ENCODE measurements at regions of chr6 and their contacts with region 1.

Region 1: GRCh38 chr6:109039795-109040194 is 54.9 kb downstream of the SESN1 start:
- DNase-seq: no peak
- ATAC-seq: peak; percentile 58; the same call in 1 of the 2 replicates
- H3K4me3 ChIP-seq: no peak overlapping the region
- H3K27ac ChIP-seq: no peak overlapping the region
- H3K4me1 ChIP-seq: no peaks in the 10 kb centered on the region
- H3K27me3 ChIP-seq: no peaks in the 10 kb centered on the region
- CTCF ChIP-seq: no peak

Region 2: DNA sequence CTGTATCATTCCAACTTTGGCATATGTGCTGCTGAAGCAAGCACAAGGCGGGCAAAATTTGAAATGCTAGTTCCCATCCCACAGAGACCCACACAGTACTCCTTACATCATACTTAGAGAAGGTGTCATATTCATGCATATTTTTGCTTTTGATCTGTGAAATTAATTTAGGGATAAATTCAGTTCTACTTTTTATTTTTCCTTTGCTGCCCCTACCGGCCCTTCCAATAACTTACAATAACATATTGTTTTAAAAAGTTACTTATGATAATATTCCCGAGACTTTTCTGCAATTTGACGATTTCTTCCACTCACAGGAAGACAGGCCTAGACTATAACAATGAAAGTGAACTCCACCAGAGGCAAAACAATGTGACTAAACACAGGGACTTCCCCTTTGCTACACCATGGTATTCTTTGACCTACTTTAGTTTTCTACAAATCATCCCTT is 19.8 kb after region 1 on chr6:
- CTCF ChIA-PET with region 1: no interaction called
- POLR2A ChIA-PET with region 1: interaction called, 10 read pairs
- in situ Hi-C with region 1: no loop called
- intact Hi-C with region 1: no loop called
- DNase-seq: no peak
- ATAC-seq: peak; percentile 71
- H3K4me3 ChIP-seq: no peak overlapping the region
- H3K27ac ChIP-seq: no peak overlapping the region
- H3K4me1 ChIP-seq: 0 out of 2 replicates have a peak, but pooled peaks cover 2% of the 10 kb centered on the region
- H3K27me3 ChIP-seq: no peaks in the 10 kb centered on the region
- CTCF ChIP-seq: peak; percentile 53; the same call in 1 of the 2 replicates